Activated naive CD4-positive, alpha-beta T cell treated with anti-CD3 and anti-CD28 coated beads, Interleukin-2, amount 10 ng/mL, durations not matched to agents 7 days and 5 days (primary cell): ENCODE measurements at regions of chr7 and their contacts with region 1.

Region 1: GRCh38 chr7:32891800-32892520 is 400 bp upstream of the KBTBD2 start:
- DNase-seq: peak; percentile 98
- H3K4me3 Mint-ChIP-seq: peak overlapping the region; percentile 83
- H3K27ac Mint-ChIP-seq: peak overlapping the region; percentile 96
- H3K4me1 Mint-ChIP-seq: peaks cover 58% of the 10 kb centered on the region
- H3K27me3 Mint-ChIP-seq: peaks cover 6% of the 10 kb centered on the region

Region 2: DNA sequence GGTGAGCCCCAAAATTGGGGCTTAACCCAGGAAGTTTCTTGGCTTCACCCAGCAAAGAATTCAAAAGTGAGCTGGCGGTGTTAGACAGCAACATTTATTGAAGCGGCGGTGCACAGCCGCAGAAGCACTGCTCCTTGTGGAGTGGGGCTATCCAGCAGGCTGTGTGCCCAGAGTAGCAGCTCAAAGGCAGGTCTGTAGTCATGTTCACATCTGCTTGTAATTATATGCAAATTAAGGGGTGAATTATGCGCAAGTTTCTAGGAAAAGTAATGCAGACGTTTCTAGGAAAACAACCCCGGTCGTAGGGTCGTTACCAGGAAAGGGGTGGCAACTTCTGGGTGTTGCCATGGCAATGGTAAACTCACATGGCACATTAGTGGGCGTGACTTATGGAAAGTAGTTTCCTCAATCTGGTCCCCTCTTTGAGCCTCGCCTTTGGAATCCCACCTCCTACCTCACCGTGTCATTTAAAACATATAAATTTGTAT is 13.3 kb after region 1 on chr7:
- CTCF ChIA-PET with region 1: interaction called, 10 read pairs
- DNase-seq: peak; percentile 90
- H3K4me3 Mint-ChIP-seq: peak overlapping the region; percentile 74
- H3K27ac Mint-ChIP-seq: peak overlapping the region; percentile 96
- H3K4me1 Mint-ChIP-seq: peaks cover 24% of the 10 kb centered on the region
- H3K27me3 Mint-ChIP-seq: peaks cover 6% of the 10 kb centered on the region

Region 3: GRCh38 chr7:32942786-32943653 is 51.1 kb after region 1 on chr7:
- CTCF ChIA-PET with region 1: interaction called, 22 read pairs
- DNase-seq: peak; percentile 75
- H3K4me3 Mint-ChIP-seq: peak overlapping the region; percentile 90
- H3K27ac Mint-ChIP-seq: peak overlapping the region; percentile 64
- H3K4me1 Mint-ChIP-seq: peaks cover 14% of the 10 kb centered on the region
- H3K27me3 Mint-ChIP-seq: peaks cover 18% of the 10 kb centered on the region